Calu3 (cell line): ENCODE measurements at regions of chrX and their contacts with region 1.

Region 1: DNA sequence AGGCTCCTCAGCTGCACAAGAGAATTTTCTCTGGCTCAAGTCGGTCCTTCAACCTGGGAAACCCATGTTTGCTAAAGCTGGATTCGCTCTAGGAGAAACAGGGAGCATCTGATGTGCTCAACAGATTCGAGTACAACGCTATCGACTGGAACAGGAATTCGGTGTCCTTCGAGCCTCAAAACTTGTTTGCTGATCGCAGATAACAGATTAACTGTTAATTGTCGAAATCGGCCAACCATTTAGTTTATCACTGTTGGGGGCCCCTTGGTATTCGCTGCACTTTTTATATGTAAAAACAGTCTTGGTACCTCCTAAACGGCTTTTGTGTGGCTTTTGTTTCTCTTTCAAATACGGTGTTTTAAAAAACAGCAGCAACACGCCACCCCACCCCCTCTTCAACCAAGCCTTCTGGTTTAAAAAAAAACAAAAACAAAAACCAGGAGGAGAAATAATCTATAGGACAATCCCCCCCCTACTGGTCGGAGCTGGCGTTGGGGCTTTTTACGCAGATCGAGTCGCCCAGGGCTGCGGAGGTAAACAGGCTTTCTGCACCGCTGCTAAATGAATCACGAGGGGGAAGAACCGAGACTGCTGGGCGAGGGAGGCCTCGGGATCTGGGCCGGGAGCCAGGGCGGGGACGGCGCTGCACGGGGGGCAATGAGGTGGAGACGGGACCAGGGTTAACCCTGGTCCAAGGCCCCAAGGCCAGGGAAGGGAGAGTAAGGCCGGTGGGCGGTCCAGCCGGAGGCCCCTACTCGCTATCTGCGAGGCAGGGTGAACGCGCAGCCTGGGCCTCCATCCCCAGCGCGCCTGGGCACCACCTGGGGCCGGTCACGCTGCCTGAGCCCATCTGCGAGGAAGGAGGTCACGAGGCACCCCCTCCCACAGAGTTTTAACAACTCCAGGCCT is 71.7 kb upstream of the BCOR start:
- DNase-seq: peak; percentile 78
- H3K4me3 Mint-ChIP-seq: no peak overlapping the region
- H3K27ac Mint-ChIP-seq: no peak overlapping the region
- H3K4me1 Mint-ChIP-seq: peaks cover 46% of the 10 kb centered on the region
- H3K27me3 Mint-ChIP-seq: peaks cover 9% of the 10 kb centered on the region
- CTCF ChIP-seq: peak; percentile 51

Region 2: DNA sequence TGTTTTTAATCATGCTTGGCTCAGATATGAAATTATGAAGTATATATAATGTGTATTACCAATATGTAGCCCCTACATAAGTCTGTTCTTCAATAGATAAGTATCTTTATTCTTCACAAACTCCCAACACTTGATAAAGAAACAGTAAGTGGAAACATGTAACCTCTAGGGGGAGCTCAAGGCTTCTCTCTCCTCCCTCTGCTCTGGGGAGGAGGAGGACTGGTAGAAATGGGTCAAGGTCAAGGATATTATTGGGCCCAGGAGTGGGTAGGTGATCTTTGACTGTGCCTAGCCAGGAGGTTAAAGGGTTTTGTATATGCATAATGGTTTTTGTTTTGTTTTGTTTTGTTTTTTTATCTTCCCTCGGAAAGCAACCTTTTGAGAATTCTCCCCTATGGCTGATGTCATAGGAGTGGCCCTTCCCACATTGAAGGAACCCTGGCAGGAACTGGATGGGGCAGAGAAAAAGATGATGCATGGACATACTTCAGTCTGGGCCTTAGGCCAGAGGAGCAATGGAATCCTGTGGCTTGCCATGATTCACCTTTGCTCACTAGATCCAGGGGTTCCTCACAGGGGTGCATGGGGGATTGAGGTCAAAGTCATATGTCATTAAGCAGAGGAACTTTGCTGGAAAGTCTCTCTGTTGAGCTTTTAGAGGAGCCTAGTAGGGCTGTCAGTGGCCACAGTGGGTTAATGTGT is 907.9 kb before region 1 on chrX:
- CTCF ChIA-PET with region 1: no interaction called
- intact Hi-C with region 1: loop called (anchors 10 kb)
- DNase-seq: peak; percentile 34
- H3K4me3 Mint-ChIP-seq: no peak overlapping the region
- H3K27ac Mint-ChIP-seq: no peak overlapping the region
- H3K4me1 Mint-ChIP-seq: no peaks in the 10 kb centered on the region
- H3K27me3 Mint-ChIP-seq: peaks cover 20% of the 10 kb centered on the region
- CTCF ChIP-seq: no peak

Region 3: DNA sequence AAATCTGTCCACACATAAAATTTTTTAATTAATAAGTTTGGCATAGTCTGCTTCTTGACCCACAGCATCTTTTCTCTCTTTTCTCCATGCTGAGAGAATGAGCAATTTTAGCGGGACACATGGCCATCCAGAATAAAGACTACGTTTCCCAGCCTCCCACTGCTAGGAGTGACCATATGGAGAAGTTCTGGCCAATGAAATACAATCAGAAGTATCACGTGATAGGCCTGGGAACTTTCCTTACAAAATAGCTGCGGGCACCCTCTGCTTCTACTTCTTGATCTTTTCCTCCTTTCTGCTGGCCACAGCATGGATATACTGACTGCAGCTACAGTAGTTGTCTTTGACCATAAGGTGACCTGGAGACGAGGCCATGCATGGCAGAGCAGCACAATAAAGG is 419.7 kb before region 1 on chrX:
- CTCF ChIA-PET with region 1: no interaction called
- intact Hi-C with region 1: no loop called
- DNase-seq: no peak
- H3K4me3 Mint-ChIP-seq: no peak overlapping the region
- H3K27ac Mint-ChIP-seq: no peak overlapping the region
- H3K4me1 Mint-ChIP-seq: peaks cover 38% of the 10 kb centered on the region
- H3K27me3 Mint-ChIP-seq: no peaks in the 10 kb centered on the region
- CTCF ChIP-seq: no peak

Region 4: GRCh38 chrX:39814391-39814790 is 355.1 kb before region 1 on chrX:
- CTCF ChIA-PET with region 1: no interaction called
- intact Hi-C with region 1: loop called (anchors 10 kb)
- DNase-seq: peak; percentile 13
- H3K4me3 Mint-ChIP-seq: no peak overlapping the region
- H3K27ac Mint-ChIP-seq: no peak overlapping the region
- H3K4me1 Mint-ChIP-seq: peaks cover 11% of the 10 kb centered on the region
- H3K27me3 Mint-ChIP-seq: peaks cover 22% of the 10 kb centered on the region
- CTCF ChIP-seq: peak; percentile 20

Region 5: DNA sequence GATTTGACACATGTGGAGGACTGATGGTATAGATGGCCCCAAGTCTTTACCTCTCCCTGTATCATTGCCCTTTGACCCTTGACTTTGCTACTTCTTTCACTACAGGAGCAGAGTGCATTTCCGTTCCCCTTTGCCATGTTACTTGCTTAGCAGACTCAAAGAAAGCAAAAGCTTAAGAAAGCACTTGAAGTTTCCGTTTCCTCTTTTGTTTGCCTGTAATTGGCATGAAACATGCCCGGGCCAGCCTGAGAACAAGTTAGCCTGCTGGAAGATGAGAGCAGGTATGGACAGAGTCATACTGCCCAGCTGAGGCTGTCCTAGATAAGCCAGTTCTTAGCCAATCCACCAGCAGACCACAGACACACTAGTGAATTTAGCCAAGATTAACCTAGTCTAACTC is 277.7 kb before region 1 on chrX:
- CTCF ChIA-PET with region 1: no interaction called
- intact Hi-C with region 1: no loop called
- DNase-seq: no peak
- H3K4me3 Mint-ChIP-seq: no peak overlapping the region
- H3K27ac Mint-ChIP-seq: no peak overlapping the region
- H3K4me1 Mint-ChIP-seq: peaks cover 23% of the 10 kb centered on the region
- H3K27me3 Mint-ChIP-seq: peaks cover 24% of the 10 kb centered on the region
- CTCF ChIP-seq: no peak

Region 6: GRCh38 chrX:40013266-40014195 is 155.9 kb before region 1 on chrX:
- CTCF ChIA-PET with region 1: no interaction called
- intact Hi-C with region 1: loop called (anchors 10 kb)
- DNase-seq: peak; percentile 62
- H3K4me3 Mint-ChIP-seq: peak overlapping the region; percentile 84
- H3K27ac Mint-ChIP-seq: peak overlapping the region; percentile 64
- H3K4me1 Mint-ChIP-seq: no peaks in the 10 kb centered on the region
- H3K27me3 Mint-ChIP-seq: no peaks in the 10 kb centered on the region
- CTCF ChIP-seq: no peak

Region 7: DNA sequence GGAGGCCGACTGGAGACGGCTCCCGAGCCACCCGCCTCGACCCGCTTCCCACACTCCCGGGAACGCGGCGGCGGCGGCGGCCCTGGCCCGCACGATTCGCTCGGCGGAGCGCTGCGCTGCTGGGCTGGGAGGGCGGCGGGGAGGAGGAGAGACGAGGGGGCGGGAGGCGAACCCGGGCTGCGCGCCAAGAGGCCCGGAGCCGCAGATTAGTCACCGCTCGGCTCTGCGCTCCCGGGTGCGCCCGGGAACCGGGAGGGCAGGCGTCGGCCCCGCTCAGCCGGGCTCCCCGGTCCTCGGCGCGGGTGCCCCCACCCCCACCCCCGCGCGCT is 60.5 kb before region 1 on chrX:
- CTCF ChIA-PET with region 1: interaction called, 6 read pairs
- intact Hi-C with region 1: loop called (anchors 1 kb)
- DNase-seq: peak; percentile 84
- H3K4me3 Mint-ChIP-seq: peak overlapping the region; percentile 73
- H3K27ac Mint-ChIP-seq: peak overlapping the region; percentile 73
- H3K4me1 Mint-ChIP-seq: peaks cover 17% of the 10 kb centered on the region
- H3K27me3 Mint-ChIP-seq: no peaks in the 10 kb centered on the region
- CTCF ChIP-seq: no peak

Region 8: GRCh38 chrX:40127052-40127451 is 42.4 kb before region 1 on chrX:
- CTCF ChIA-PET with region 1: no interaction called
- intact Hi-C with region 1: no loop called
- DNase-seq: no peak
- H3K4me3 Mint-ChIP-seq: no peak overlapping the region
- H3K27ac Mint-ChIP-seq: no peak overlapping the region
- H3K4me1 Mint-ChIP-seq: peaks cover 15% of the 10 kb centered on the region
- H3K27me3 Mint-ChIP-seq: no peaks in the 10 kb centered on the region
- CTCF ChIP-seq: no peak